Activated naive CD4-positive, alpha-beta T cell treated with anti-CD3 and anti-CD28 coated beads for 36 hours (primary cell): ENCODE measurements at regions of chr12 and their contacts with region 1.

Region 1: DNA sequence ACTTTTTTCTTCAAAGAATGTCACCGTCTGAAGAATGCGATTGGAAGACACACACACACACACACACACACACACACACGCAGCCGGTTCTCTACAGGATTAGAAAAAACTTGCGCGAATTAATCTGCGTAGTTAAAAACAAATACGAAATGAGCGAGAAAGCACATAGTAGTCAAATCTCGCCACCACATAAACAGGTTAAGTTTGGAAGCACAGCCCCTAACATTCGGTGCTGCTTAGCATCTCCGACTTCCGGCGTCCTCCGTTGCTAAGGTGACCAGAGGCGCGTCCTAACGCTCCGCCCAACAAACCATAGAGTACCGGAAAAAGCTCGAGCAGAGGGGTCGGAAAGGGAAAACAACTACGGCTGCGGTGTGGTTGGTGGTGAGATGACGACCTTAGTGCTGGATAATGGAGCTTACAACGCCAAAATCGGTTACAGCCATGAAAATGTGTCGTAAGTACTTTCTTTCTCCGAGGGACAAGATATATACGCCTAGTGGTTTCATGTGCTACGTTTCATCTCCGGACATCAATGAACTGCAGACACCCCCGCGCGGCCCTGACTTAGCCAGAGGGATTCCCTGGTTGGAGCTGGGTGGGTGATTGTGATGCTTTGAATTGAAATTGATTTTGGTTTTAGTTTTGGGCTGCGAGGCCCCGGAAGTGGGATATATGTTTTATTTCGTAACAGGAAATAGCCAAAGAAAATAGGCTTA is at the start of gene ACTR6:
- DNase-seq: peak; percentile 98
- H3K4me3 Mint-ChIP-seq: peak within 1 kb of the TSS; percentile 99
- H3K27ac Mint-ChIP-seq: peak within 1 kb of the TSS; percentile 99
- H3K4me1 Mint-ChIP-seq: peaks cover 27% of the 10 kb centered on the region
- H3K27me3 Mint-ChIP-seq: no peaks in the 10 kb centered on the region
- total RNA-seq, gene ACTR6: 38.0 to 41.8 TPM

Region 2: GRCh38 chr12:98503592-98504367 is 1696.8 kb before region 1 on chr12:
- CTCF ChIA-PET with region 1: no interaction called
- intact Hi-C with region 1: loop called (anchors 2 kb)
- DNase-seq: peak; percentile 97
- H3K4me3 Mint-ChIP-seq: peak overlapping the region; percentile 97
- H3K27ac Mint-ChIP-seq: peak overlapping the region; percentile 100
- H3K4me1 Mint-ChIP-seq: peaks cover 16% of the 10 kb centered on the region
- H3K27me3 Mint-ChIP-seq: peaks cover 8% of the 10 kb centered on the region

Region 3: GRCh38 chr12:98516184-98516873 is 1684.3 kb before region 1 on chr12:
- CTCF ChIA-PET with region 1: no interaction called
- intact Hi-C with region 1: loop called (anchors 5 kb)
- DNase-seq: peak; percentile 96
- H3K4me3 Mint-ChIP-seq: peak overlapping the region; percentile 92
- H3K27ac Mint-ChIP-seq: peak overlapping the region; percentile 99
- H3K4me1 Mint-ChIP-seq: peaks cover 37% of the 10 kb centered on the region
- H3K27me3 Mint-ChIP-seq: no peaks in the 10 kb centered on the region

Region 4: DNA sequence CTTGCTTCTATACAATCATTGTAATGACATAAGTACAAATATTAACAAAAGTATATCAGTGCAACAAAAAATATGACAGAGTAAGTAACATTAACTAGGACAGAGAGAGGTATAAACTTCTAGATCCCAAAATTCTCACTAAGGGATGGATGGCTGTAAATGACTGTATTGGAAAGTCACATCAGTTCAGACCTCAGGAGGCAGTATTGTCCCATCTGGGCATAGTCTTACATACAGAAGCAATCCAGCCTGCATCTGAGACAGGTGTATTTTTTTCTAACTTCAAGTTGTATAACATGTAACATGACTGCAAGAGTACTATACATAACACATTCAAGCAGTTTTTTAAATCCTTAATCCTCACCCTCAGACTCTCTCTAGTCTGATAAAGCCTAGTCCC is 454.1 kb before region 1 on chr12:
- CTCF ChIA-PET with region 1: no interaction called
- intact Hi-C with region 1: no loop called
- DNase-seq: no peak
- H3K4me3 Mint-ChIP-seq: no peak overlapping the region
- H3K27ac Mint-ChIP-seq: no peak overlapping the region
- H3K4me1 Mint-ChIP-seq: no peaks in the 10 kb centered on the region
- H3K27me3 Mint-ChIP-seq: no peaks in the 10 kb centered on the region

Region 5: DNA sequence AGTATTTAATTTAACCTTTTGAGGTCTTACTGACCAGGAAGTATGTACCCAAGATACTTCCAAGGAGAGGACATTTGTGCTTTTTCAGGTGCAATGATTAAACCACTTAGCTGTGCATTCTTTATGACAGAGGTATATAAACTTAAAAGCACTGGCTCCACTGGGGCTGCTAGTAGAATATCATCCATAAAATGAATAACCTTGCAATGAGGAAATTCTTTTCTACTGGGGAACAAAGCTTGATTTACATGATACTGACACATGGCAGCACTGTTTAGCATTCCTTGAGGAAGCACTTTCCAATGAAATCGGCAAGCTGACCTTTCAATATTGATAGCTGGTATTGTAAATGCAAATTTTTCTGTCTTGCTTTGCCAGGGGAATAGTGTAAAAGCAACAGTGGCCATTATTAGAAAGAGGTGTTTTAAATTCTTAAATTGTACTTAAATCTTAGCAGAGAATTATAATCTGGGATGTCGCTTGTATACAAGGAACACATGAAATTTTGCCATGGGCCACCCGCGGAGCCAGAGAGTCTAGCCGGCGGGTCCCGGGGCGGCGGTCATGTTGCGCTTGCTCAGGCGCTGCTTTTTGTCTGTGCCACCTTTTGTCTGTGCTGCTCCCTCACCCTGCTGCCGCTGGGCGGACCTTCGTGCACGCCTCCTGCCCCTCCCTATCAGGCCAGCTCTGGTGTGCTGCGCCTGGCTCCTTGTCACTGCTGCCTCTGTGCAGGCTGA is 37.0 kb before region 1 on chr12:
- CTCF ChIA-PET with region 1: no interaction called
- intact Hi-C with region 1: loop called (anchors 1 kb)
- DNase-seq: peak; percentile 81
- H3K4me3 Mint-ChIP-seq: peak overlapping the region; percentile 60
- H3K27ac Mint-ChIP-seq: no peak overlapping the region
- H3K4me1 Mint-ChIP-seq: peaks cover 6% of the 10 kb centered on the region
- H3K27me3 Mint-ChIP-seq: no peaks in the 10 kb centered on the region

Region 6: GRCh38 chr12:100329800-100330199 is 129.2 kb after region 1 on chr12:
- CTCF ChIA-PET with region 1: no interaction called
- intact Hi-C with region 1: loop called (anchors 5 kb)
- DNase-seq: peak; percentile 21
- H3K4me3 Mint-ChIP-seq: no peak overlapping the region
- H3K27ac Mint-ChIP-seq: no peak overlapping the region
- H3K4me1 Mint-ChIP-seq: peaks cover 8% of the 10 kb centered on the region
- H3K27me3 Mint-ChIP-seq: no peaks in the 10 kb centered on the region

Region 7: GRCh38 chr12:101280006-101280505 is 1079.4 kb after region 1 on chr12 and contains the start of gene UTP20:
- CTCF ChIA-PET with region 1: no interaction called
- intact Hi-C with region 1: loop called (anchors 1 kb)
- DNase-seq: peak; percentile 96
- H3K4me3 Mint-ChIP-seq: peak within 1 kb of the TSS; percentile 94
- H3K27ac Mint-ChIP-seq: peak within 1 kb of the TSS; percentile 73
- H3K4me1 Mint-ChIP-seq: peaks cover 24% of the 10 kb centered on the region
- H3K27me3 Mint-ChIP-seq: peaks cover 6% of the 10 kb centered on the region
- total RNA-seq, gene UTP20: 15.8 to 16.8 TPM